A673 (cell line): ENCODE measurements at regions of chr7 and their contacts with region 1.

Region 1: GRCh38 chr7:80472491-80473200 is 39.2 kb downstream of the GNAT3 start:
- DNase-seq: no peak
- H3K4me3 ChIP-seq: no peak overlapping the region
- H3K27ac ChIP-seq: no peak overlapping the region
- H3K4me1 ChIP-seq: no peaks in the 10 kb centered on the region
- H3K27me3 ChIP-seq: no peaks in the 10 kb centered on the region
- CTCF ChIP-seq: no peak

Region 2: DNA sequence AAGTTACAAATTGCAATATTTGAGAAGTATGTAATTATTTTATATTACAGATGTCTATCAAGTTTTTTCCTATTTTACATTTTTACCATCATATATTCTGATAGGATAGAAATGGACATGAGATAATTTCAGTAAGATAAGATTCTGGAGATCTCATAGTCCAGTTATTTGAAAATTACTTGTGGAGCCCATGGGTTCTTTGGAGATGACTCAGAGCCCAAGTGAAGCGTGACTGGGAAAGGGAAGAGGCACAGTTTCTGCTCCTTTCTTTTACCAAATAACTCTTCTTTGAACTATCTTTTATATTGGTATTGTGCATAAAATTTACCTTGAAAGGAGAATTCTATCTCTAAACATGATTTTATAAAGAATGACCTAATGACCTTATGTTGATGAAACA is 168.2 kb after region 1 on chr7:
- CTCF ChIA-PET with region 1: no interaction called
- POLR2A ChIA-PET with region 1: no interaction called
- intact Hi-C with region 1: loop called (anchors 5 kb)
- DNase-seq: peak; percentile 57
- H3K4me3 ChIP-seq: no peak overlapping the region
- H3K27ac ChIP-seq: no peak overlapping the region
- H3K4me1 ChIP-seq: peaks cover 34% of the 10 kb centered on the region
- H3K27me3 ChIP-seq: no peaks in the 10 kb centered on the region
- CTCF ChIP-seq: no peak